ENCODE measurements at regions of chrX and their contacts with region 1.

Region 1: GRCh38 chrX:119753571-119754257 is 4.7 kb upstream of the SOWAHD start:
- DNase-seq: peak; percentile 90
- H3K4me3 Mint-ChIP-seq: no peak overlapping the region
- H3K27ac Mint-ChIP-seq: peak overlapping the region; percentile 99
- H3K4me1 Mint-ChIP-seq: peaks cover 37% of the 10 kb centered on the region
- H3K27me3 Mint-ChIP-seq: no peaks in the 10 kb centered on the region

Region 2: DNA sequence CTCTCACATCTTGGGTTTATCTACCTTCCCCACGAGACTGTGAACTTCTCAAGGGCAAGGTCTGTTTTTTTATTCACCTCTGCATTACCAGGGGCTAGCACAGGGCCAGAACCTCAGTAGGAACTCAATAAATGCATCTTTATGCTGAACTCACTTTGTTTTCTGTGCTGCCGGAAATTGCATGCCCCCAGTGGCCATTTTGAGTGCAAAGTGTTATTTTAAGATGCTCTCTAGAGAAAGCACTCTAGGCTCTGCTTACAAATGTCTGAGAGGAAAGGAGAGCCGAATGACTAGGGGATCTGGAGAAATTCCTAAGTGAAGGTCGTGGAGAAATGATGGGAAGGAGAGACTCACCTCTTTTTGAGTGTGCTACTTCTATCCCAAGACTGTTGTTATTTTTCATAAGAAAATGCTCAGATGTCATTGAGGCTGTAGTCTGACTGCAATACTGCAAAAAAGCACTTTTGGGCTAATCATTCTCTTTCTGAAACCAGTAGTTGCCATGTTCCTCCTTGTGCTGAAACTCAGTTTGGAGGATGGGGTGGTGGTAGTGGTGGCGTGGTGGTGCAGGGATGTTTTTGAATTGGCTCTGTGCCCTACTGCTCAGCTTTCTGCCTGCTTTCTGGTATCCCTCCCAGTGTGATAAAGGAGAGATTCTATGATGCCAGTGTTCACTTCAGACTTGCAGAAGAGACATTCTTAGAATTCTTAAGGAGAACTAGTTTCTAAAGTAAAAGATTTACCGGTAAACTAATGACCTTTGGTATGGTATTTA is 1216.8 kb before region 1 on chrX:
- intact Hi-C with region 1: loop called (anchors 10 kb)
- DNase-seq: peak; percentile 82
- H3K4me3 Mint-ChIP-seq: peak overlapping the region; percentile 74
- H3K27ac Mint-ChIP-seq: peak overlapping the region; percentile 88
- H3K4me1 Mint-ChIP-seq: peaks cover 44% of the 10 kb centered on the region
- H3K27me3 Mint-ChIP-seq: no peaks in the 10 kb centered on the region

Region 3: GRCh38 chrX:119647552-119648420 is 105.9 kb before region 1 on chrX:
- intact Hi-C with region 1: loop called (anchors 2 kb)
- DNase-seq: peak; percentile 84
- H3K4me3 Mint-ChIP-seq: peak overlapping the region; percentile 54
- H3K27ac Mint-ChIP-seq: peak overlapping the region; percentile 94
- H3K4me1 Mint-ChIP-seq: peaks cover 18% of the 10 kb centered on the region
- H3K27me3 Mint-ChIP-seq: no peaks in the 10 kb centered on the region

Region 4: DNA sequence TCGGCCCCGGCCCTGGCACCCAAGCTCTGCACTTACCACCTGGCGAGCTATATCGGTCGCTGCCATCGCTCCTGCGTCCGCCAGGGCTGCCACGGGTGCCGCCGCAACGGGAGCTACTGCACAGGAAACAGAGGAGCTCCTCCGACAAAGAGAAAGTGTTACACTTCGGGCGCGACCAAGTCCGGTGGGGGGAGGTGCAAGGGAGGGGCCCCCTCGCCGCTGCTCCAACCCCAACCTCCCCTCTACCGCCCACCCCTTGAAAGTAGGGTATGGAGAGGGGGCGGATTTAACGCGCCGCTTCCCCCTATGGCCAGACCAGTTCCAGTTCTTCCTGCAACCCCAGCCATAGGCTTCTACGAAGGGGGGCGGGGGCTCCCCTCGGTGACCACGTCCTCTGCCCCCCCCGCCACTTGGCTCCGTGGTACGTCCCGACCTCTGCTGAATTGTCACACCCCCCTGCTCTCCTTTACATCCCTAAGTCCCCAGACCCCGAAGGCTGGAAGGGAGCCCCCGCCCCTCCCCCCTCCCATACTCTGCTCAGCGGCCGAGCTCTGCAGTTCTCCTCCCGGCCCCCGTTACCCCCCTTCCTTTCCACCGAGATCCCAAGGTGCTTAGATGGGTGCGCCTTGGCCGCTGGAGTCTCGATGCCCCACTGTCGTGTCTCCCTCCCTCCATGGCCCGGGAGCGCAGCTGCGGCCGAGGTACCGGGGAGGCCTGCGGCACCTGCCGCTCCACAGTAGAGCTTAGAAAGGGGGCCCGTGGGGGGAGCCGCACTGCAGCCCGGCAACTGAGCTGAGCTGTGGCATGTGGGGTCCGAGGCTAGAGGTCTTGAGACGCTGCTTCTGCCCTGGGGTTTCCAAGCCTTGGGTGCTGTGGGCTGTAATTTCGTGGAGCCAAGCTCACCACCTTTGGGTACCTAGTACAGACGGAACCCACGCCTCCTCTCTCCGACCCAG is 60.4 kb before region 1 on chrX and contains the start of gene SEPTIN6:
- intact Hi-C with region 1: loop called (anchors 2 kb)
- DNase-seq: peak; percentile 94
- H3K4me3 Mint-ChIP-seq: peak within 1 kb of the TSS; percentile 96
- H3K27ac Mint-ChIP-seq: peak within 1 kb of the TSS; percentile 99
- H3K4me1 Mint-ChIP-seq: peaks cover 4% of the 10 kb centered on the region
- H3K27me3 Mint-ChIP-seq: no peaks in the 10 kb centered on the region
- total RNA-seq, gene SEPTIN6: 151 and 153 TPM in 2 replicates

Region 5: GRCh38 chrX:119826399-119826959 is 72.8 kb after region 1 on chrX:
- intact Hi-C with region 1: loop called (anchors 2 kb)
- DNase-seq: peak; percentile 63
- H3K4me3 Mint-ChIP-seq: no peak overlapping the region
- H3K27ac Mint-ChIP-seq: peak overlapping the region; percentile 45
- H3K4me1 Mint-ChIP-seq: peaks cover 4% of the 10 kb centered on the region
- H3K27me3 Mint-ChIP-seq: no peaks in the 10 kb centered on the region

Measured in activated CD4-positive, alpha-beta T cell treated with anti-CD3 and anti-CD28 coated beads, Interleukin-2, amount 10 ng/mL, durations not matched to agents 24 days and 14 days (primary cell).